Naive thymus-derived CD4-positive, alpha-beta T cell (primary cell): ENCODE measurements at regions of chr16 and their contacts with region 1.

Region 1: GRCh38 chr16:25279491-25279890 is 21.8 kb upstream of the ZKSCAN2 start:
- DNase-seq: no peak
- ATAC-seq: no peak
- H3K4me3 ChIP-seq: no peak overlapping the region
- H3K4me3 Mint-ChIP-seq: no peak overlapping the region
- H3K27ac ChIP-seq: no peak overlapping the region
- H3K27ac Mint-ChIP-seq: no peak overlapping the region
- H3K4me1 ChIP-seq: no peaks in the 10 kb centered on the region
- H3K4me1 Mint-ChIP-seq: peaks cover 0 to 9% (median 3%) of the 10 kb centered on the region in 7 donors
- H3K27me3 ChIP-seq: no peaks in the 10 kb centered on the region
- H3K27me3 Mint-ChIP-seq: peaks cover 0 to 8% (median 0%) of the 10 kb centered on the region in 5 donors

Region 2: GRCh38 chr16:25265968-25266367 is 13.5 kb before region 1 on chr16:
- CTCF ChIA-PET with region 1: interaction called, 11 read pairs
- POLR2A ChIA-PET with region 1: no interaction called
- intact Hi-C with region 1: no loop called
- DNase-seq: no peak
- ATAC-seq: no peak
- H3K4me3 ChIP-seq: no peak overlapping the region
- H3K4me3 Mint-ChIP-seq: no peak overlapping the region
- H3K27ac ChIP-seq: no peak overlapping the region
- H3K27ac Mint-ChIP-seq: no peak overlapping the region
- H3K4me1 ChIP-seq: peaks cover 0 to under 1% of the 10 kb centered on the region in 2 donors
- H3K4me1 Mint-ChIP-seq: peaks cover 20 to 48% (median 37%) of the 10 kb centered on the region in 7 donors
- H3K27me3 ChIP-seq: no peaks in the 10 kb centered on the region
- H3K27me3 Mint-ChIP-seq: no peaks in the 10 kb centered on the region